ENCODE measurements at regions of chr2 and their contacts with region 1.

Region 1: GRCh38 chr2:120231974-120232635 is 8.9 kb upstream of the TMEM185B start:
- DNase-seq: peak; percentile 86
- H3K4me3 Mint-ChIP-seq: peak overlapping the region; percentile 82
- H3K27ac Mint-ChIP-seq: peak overlapping the region; percentile 94
- H3K4me1 Mint-ChIP-seq: peaks cover 47% of the 10 kb centered on the region
- H3K27me3 Mint-ChIP-seq: no peaks in the 10 kb centered on the region

Region 2: DNA sequence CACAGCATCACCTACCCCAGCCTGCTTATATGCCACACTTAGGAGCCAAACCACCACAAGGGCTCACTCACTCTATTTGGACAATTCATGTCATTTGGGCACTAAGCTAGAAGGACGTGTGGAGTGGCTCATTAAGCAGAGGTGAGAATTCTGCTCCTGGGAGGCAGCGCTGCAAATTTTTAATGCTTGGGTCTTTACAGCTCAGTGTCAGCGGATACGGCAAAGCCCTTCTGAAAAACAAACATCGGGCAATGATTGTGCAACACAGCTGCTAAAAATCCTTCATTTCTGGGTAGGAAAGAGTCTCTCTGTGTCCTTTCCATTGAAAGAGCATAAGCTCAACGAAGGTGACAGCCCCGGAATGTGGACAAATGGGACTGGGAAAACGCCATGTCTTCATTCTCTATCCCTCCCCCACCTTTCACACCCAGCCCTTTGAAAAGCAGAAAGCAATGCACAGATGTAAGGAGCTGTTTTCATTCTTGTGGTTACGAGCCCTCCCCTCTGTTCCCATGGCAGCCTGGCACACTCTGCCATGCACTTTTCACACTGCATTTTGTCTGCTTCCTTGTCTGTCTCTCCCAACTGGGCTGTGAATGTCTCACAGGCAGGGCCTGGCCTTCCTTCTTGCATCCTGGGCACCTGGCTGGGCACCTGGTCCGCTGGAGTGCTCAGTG is 537.1 kb before region 1 on chr2:
- CTCF ChIA-PET with region 1: no interaction called
- intact Hi-C with region 1: loop called (anchors 5 kb)
- DNase-seq: peak; percentile 51
- H3K4me3 Mint-ChIP-seq: peak overlapping the region; percentile 32
- H3K27ac Mint-ChIP-seq: no peak overlapping the region
- H3K4me1 Mint-ChIP-seq: peaks cover 48% of the 10 kb centered on the region
- H3K27me3 Mint-ChIP-seq: no peaks in the 10 kb centered on the region

Region 3: DNA sequence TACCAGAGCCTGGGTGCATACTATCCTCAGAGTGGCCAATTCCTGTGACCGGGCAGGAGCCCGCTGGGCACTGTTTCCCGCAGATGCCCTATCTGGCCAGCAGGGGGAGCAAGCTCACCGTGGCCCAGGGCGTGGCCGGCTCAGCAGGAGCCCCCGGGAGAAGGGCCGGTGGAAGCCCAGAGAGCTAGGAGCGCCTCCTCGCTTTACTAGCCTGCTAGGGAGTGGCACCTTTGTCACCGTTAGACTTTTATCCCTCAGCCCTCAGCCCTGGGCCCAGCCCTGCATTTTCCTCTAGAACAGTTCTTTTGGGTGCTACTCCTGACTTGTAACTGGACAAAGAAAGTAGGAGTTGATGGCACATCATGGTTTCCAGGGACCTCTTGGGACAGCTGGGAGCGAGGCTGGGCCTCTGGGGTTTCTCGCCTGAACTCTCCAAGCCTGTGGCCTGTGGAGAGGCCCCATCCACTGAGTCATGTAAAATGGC is 529.1 kb before region 1 on chr2:
- CTCF ChIA-PET with region 1: interaction called, 10 read pairs
- intact Hi-C with region 1: loop called (anchors 5 kb)
- DNase-seq: peak; percentile 74
- H3K4me3 Mint-ChIP-seq: no peak overlapping the region
- H3K27ac Mint-ChIP-seq: no peak overlapping the region
- H3K4me1 Mint-ChIP-seq: peaks cover 16% of the 10 kb centered on the region
- H3K27me3 Mint-ChIP-seq: no peaks in the 10 kb centered on the region

Region 4: GRCh38 chr2:119826370-119826961 is 405.6 kb before region 1 on chr2:
- CTCF ChIA-PET with region 1: no interaction called
- intact Hi-C with region 1: loop called (anchors 5 kb)
- DNase-seq: peak; percentile 58
- H3K4me3 Mint-ChIP-seq: no peak overlapping the region
- H3K27ac Mint-ChIP-seq: no peak overlapping the region
- H3K4me1 Mint-ChIP-seq: peaks cover 43% of the 10 kb centered on the region
- H3K27me3 Mint-ChIP-seq: no peaks in the 10 kb centered on the region

Region 5: DNA sequence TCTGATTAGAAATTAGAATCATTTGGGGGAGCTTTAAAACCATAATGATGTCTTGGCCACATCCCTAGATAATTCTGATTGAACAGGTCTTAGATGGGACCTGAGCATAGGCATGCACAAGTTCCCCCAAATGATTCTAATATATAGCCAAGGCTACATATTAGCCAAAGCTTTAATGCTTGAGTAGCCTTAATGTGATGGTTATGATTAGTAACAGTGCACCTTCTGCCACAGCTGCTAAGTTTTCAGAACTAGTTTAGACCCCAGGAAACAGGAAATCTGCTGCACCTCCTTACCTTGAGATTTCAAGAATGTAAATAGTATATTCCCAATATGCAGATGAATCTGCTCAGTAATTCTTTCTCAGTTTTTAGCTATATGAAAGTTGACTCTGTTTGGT is 352.6 kb before region 1 on chr2:
- CTCF ChIA-PET with region 1: no interaction called
- intact Hi-C with region 1: no loop called
- DNase-seq: no peak
- H3K4me3 Mint-ChIP-seq: no peak overlapping the region
- H3K27ac Mint-ChIP-seq: no peak overlapping the region
- H3K4me1 Mint-ChIP-seq: peaks cover 24% of the 10 kb centered on the region
- H3K27me3 Mint-ChIP-seq: no peaks in the 10 kb centered on the region

Region 6: DNA sequence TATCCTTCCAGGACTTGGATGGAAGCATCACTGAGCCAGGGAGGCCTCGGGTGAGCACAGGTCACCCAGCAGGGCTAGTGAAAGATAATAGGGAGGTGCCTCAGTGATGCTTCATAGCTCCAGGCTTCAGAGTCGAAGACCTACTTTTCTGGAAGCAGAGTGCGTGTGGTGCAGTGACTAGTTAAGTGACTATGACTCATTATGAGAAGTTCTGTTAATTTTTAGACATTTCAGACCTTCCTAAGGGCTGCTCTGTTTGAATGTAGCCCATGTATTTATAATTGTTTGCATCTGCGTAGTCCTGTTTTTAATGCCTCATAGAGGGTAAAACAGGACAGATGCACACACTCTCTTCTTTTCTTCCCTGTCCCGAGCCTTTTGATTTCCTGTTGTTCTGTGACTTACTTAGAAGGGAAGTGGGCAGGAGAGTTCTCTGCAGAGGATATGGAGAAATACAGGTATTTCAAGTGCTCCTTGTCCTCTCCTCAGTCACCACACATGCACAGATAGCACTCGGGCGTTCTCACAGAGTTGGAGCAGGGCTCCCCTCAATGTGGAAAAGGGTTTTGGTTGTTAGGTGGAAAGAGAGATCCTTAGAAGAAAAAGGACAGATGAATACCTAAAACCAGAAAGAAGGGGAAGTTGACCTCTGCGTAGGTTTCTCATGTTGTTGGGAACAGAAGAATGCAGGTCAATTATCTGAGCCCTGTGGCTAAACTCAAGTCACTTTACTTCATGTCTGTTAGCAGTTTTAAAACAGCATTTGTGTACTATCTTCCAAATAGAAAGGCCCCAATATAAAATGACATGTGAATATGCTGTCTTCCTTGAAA is 55.3 kb after region 1 on chr2:
- CTCF ChIA-PET with region 1: interaction called, 3 read pairs
- intact Hi-C with region 1: loop called (anchors 1 kb)
- DNase-seq: peak; percentile 58
- H3K4me3 Mint-ChIP-seq: no peak overlapping the region
- H3K27ac Mint-ChIP-seq: peak overlapping the region; percentile 55
- H3K4me1 Mint-ChIP-seq: peaks cover 23% of the 10 kb centered on the region
- H3K27me3 Mint-ChIP-seq: no peaks in the 10 kb centered on the region

Region 7: DNA sequence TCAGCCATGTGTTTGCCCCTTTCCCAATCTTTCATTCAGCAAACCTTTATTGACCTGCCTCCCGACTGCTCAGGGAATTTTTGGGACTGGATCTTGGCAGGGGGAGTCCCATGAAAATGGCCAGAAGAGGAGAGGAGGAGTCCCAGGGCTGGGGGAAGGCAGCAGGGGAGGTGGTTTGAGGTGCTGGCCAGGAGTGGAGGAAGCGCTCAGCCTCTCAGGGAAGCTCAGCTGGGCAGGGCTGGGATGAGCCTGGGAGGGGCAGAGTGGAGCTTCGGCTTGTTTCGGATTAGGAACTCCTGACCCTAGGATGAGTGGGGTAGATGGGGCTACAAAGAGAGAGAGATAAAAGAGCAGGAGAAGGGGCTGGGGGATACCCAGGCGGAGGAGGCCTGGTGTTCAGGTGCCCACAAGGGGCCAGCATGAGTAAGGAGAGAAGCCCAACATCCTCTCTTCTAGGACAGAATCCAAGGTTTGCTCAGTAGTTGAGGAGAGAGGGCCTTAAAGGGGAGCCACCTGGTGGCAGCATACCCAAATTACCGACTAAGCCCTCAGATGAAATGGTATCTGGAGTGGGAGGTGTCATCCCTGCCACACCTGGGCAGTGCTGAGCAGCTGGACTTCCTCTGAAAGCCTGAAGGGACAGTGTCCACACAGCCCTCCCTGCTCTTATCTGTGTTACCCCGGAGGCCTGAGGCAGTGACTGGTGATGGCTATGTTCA is 204.9 kb after region 1 on chr2:
- CTCF ChIA-PET with region 1: no interaction called
- intact Hi-C with region 1: loop called (anchors 5 kb)
- DNase-seq: peak; percentile 50
- H3K4me3 Mint-ChIP-seq: no peak overlapping the region
- H3K27ac Mint-ChIP-seq: no peak overlapping the region
- H3K4me1 Mint-ChIP-seq: peaks cover 4% of the 10 kb centered on the region
- H3K27me3 Mint-ChIP-seq: peaks cover 10% of the 10 kb centered on the region